Caco-2 (cell line): ENCODE measurements at regions of chr17 and their contacts with region 1.

Region 1: DNA sequence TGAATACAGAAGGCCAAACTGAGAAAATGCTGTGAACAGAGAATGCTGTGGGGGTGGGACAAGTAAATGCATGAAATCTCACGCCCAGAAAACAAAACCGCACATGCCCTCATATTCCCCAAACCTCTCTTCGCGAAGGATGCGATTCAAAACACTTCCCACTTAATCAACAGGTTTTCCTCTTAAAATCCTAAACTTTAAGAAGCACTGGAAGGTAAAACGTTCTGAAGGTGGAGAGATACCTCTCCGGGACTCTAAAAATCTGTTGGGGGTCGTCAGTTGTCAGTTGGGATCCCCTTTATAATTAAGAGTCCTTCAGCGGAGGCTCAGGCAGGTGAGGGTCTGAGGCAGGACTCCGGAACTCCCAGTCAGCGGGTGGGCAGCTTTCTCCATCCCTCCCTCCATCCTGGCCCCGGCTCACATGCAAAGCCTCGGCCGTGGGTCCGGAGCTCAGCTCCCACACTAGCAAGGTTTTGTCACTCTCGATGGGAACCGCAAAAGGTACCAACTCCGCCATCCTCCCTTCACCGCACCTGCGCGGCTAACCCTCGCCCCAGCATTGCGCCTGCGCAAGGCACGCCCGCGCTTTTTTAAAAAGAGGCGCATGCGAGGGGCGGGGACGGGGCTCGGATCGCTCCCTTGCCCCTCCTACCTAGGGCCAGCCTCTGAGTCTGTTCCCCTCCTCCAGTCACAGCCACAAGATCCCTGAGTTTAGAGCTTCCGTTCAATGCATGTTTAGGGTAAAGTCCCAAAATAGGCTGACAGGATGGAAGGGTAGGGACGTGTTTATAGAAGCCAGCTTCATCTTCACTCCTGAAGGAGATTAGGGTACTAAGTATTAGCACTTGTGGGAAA is at the start of gene RDM1:
- DNase-seq: peak; percentile 93 to 94
- H3K4me3 ChIP-seq: peak within 1 kb of the TSS; percentile 49
- H3K4me3 Mint-ChIP-seq: peak within 1 kb of the TSS; percentile 95
- H3K27ac Mint-ChIP-seq: peak within 1 kb of the TSS; percentile 80
- H3K4me1 ChIP-seq: peaks cover 3% of the 10 kb centered on the region; the same call in 1 of the 2 replicates
- H3K4me1 Mint-ChIP-seq: peaks cover 20% of the 10 kb centered on the region
- H3K27me3 ChIP-seq: no peaks in the 10 kb centered on the region
- H3K27me3 Mint-ChIP-seq: no peaks in the 10 kb centered on the region
- CTCF ChIP-seq: no peak
- total RNA-seq, gene RDM1: 9.9 and 12.9 TPM in 2 replicates

Region 2: GRCh38 chr17:35849469-35850348 is 80.7 kb before region 1 on chr17:
- CTCF ChIA-PET with region 1: interaction called, 3 read pairs
- POLR2A ChIA-PET with region 1: no interaction called
- intact Hi-C with region 1: loop called (anchors 5 kb)
- DNase-seq: peak; percentile 74 to 76
- H3K4me3 ChIP-seq: no peak overlapping the region
- H3K4me3 Mint-ChIP-seq: no peak overlapping the region
- H3K27ac Mint-ChIP-seq: peak overlapping the region; percentile 4
- H3K4me1 ChIP-seq: no peaks in the 10 kb centered on the region
- H3K4me1 Mint-ChIP-seq: no peaks in the 10 kb centered on the region
- H3K27me3 ChIP-seq: no peaks in the 10 kb centered on the region
- H3K27me3 Mint-ChIP-seq: no peaks in the 10 kb centered on the region
- CTCF ChIP-seq: peak; percentile 80 to 83

Region 3: GRCh38 chr17:35906191-35906922 is 24.1 kb before region 1 on chr17:
- CTCF ChIA-PET with region 1: no interaction called
- POLR2A ChIA-PET with region 1: no interaction called
- intact Hi-C with region 1: no loop called
- DNase-seq: no peak
- H3K4me3 ChIP-seq: no peak overlapping the region
- H3K4me3 Mint-ChIP-seq: no peak overlapping the region
- H3K27ac Mint-ChIP-seq: no peak overlapping the region
- H3K4me1 ChIP-seq: peaks cover 32% of the 10 kb centered on the region
- H3K4me1 Mint-ChIP-seq: peaks cover 11% of the 10 kb centered on the region
- H3K27me3 ChIP-seq: no peaks in the 10 kb centered on the region
- H3K27me3 Mint-ChIP-seq: no peaks in the 10 kb centered on the region
- CTCF ChIP-seq: no peak

Region 4: DNA sequence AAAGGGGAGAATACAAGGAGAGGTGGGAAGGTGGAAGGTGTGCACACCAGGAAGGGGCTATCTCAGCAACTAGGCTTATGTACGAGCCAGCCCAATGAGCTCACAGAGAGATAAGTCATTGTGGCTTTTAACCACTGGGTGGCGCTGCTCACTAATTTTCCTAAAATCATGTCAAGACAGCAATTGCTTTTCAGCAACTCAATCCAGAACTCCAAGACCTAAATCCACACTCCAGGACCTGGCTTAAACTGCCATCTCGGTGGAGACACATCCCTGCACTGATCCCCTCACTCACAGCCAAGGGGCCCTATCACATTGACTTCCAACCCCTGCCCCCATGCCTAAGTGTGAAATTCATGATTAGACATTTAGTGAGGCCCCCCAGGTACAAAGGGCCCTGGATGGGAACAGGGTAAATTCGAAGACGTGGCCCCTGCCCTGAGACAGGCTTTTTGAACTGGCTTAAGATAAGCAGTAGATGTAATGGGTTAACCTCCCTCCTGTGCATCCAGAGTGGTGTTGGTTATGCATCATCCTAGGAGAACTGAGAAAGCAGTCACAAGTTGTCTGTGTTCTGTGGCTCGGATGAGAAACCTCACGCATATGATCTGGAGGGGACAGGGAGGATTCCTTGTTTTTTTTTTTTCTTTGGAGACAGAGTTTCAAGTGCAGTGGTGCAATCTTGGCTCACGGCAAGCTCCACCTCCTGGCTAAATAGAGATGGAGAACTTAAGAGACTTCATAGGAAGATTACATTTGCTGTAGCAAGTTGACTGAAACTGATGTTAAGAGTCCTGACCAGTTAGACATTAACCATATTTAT is 39.3 kb after region 1 on chr17:
- CTCF ChIA-PET with region 1: no interaction called
- POLR2A ChIA-PET with region 1: no interaction called
- intact Hi-C with region 1: no loop called
- DNase-seq: peak; percentile 84 to 87
- H3K4me3 ChIP-seq: no peak overlapping the region
- H3K4me3 Mint-ChIP-seq: peak overlapping the region; percentile 16
- H3K27ac Mint-ChIP-seq: peak overlapping the region; percentile 67
- H3K4me1 ChIP-seq: peaks cover 47% of the 10 kb centered on the region
- H3K4me1 Mint-ChIP-seq: peaks cover 28% of the 10 kb centered on the region
- H3K27me3 ChIP-seq: no peaks in the 10 kb centered on the region
- H3K27me3 Mint-ChIP-seq: no peaks in the 10 kb centered on the region
- CTCF ChIP-seq: peak; percentile 73 to 86